MCF 10A (cell line): ENCODE measurements at regions of chr13 and their contacts with region 1.

Region 1: DNA sequence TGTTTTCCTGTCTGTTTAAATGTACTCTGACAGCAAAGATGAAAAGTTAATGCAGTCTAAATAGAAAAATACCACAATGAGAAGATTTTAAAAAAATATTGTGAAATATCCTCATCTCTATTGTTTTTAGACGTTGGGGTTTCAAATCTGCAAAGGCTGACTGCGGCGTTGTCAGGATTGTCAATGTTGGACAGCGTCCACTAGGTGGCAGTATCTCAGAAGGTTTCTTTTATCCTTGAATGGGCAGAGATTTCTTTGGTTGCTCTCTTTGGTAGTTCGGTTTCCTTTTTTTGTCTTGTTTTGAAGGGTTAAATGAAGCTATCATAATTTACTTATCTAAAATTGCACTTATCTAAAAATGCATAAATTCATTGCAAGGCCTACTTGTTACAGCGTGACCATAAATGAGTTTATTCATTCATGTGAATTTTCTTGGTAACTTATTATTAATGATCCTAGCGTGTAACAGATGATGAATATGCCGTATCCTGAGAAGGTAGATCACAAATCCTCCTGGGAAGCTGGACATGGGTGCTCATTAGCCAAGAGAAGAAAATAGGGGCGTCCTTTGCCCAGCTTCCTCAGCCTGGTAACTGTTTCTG is 21.1 kb downstream of the TNFSF11 start:
- DNase-seq: peak; percentile 89
- H3K4me3 Mint-ChIP-seq: no peak overlapping the region
- H3K27ac Mint-ChIP-seq: no peak overlapping the region
- H3K4me1 Mint-ChIP-seq: peaks cover 11% of the 10 kb centered on the region
- H3K27me3 Mint-ChIP-seq: peaks cover 17% of the 10 kb centered on the region
- CTCF ChIP-seq: peak; percentile 74

Region 2: DNA sequence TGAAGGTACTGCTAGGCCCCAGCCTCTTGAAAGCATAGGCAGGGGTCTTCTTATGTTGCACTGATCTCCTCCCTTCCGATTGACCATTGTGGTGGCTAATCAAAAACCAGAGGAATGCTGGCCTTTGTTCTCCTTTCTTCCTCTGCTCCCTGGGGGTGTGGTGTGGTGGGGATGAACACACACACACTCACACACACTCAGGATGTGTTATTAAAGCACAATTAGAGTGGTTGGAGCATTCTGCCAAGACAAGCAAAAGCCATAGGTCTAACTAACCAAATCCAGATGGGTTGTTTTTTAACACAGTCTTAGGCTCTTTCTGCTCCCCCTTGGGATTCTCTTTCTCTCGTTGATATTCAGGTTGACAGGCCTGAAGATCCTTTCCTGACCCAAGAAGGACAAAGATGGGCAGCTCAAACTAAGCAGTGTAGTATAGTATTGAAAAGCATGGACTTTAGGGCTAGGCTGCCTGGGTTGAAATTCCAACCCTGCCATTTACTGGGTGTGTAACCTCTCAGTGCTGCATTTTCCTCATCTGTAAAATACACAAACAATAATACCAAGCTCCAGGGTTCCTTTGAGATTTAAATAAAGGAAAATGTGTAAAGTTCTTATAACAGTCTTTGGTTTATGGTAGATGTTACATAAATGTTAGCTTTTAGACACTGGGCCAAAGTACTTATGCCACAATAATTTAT is 572.1 kb before region 1 on chr13:
- CTCF ChIA-PET with region 1: no interaction called
- POLR2A ChIA-PET with region 1: no interaction called
- intact Hi-C with region 1: no loop called
- DNase-seq: no peak
- H3K4me3 Mint-ChIP-seq: no peak overlapping the region
- H3K27ac Mint-ChIP-seq: no peak overlapping the region
- H3K4me1 Mint-ChIP-seq: peaks cover 18% of the 10 kb centered on the region
- H3K27me3 Mint-ChIP-seq: no peaks in the 10 kb centered on the region
- CTCF ChIP-seq: no peak

Region 3: GRCh38 chr13:42333613-42334328 is 261.3 kb before region 1 on chr13:
- CTCF ChIA-PET with region 1: interaction called, 3 read pairs
- POLR2A ChIA-PET with region 1: no interaction called
- intact Hi-C with region 1: loop called (anchors 1 kb)
- DNase-seq: peak; percentile 45
- H3K4me3 Mint-ChIP-seq: no peak overlapping the region
- H3K27ac Mint-ChIP-seq: no peak overlapping the region
- H3K4me1 Mint-ChIP-seq: peaks cover 5% of the 10 kb centered on the region
- H3K27me3 Mint-ChIP-seq: no peaks in the 10 kb centered on the region
- CTCF ChIP-seq: peak; percentile 49

Region 4: DNA sequence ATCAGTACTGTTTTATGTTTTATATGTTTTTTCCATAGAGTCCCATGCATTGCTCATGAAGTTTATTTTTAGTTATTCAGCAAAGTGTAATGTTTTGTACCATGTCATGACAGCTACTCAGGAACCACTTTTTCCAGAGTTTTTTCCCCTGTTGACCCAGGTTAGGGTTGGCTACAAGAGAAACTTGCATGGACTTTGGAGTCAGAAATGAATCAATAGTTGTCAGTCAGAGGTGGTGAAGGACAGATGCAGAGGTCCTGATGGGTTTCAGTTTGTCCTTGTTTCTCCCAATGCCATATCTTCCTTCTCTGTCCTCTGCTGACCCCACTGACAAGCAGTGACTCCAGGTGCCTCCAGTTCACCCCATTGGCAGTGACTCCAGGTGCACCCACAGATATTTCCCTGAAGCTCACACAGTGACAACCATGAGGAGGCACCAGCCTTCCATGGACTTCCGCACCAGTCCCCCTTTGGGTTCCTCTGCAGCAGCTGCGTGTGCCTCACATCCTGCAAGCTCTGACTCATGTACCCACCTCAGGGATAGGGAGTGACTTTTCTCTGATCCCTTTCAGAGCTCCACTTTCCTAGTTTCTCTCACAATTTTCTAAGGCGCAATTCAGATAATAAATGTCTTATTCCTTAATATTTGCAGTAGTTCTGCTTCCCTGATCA is 231.0 kb before region 1 on chr13:
- CTCF ChIA-PET with region 1: no interaction called
- POLR2A ChIA-PET with region 1: no interaction called
- intact Hi-C with region 1: loop called (anchors 1 kb)
- DNase-seq: peak; percentile 65
- H3K4me3 Mint-ChIP-seq: no peak overlapping the region
- H3K27ac Mint-ChIP-seq: no peak overlapping the region
- H3K4me1 Mint-ChIP-seq: peaks cover 12% of the 10 kb centered on the region
- H3K27me3 Mint-ChIP-seq: no peaks in the 10 kb centered on the region
- CTCF ChIP-seq: no peak

Region 5: GRCh38 chr13:42660333-42660965 is 65.4 kb after region 1 on chr13:
- CTCF ChIA-PET with region 1: interaction called, 15 read pairs
- POLR2A ChIA-PET with region 1: no interaction called
- intact Hi-C with region 1: loop called (anchors 2 kb)
- DNase-seq: peak; percentile 31
- H3K4me3 Mint-ChIP-seq: no peak overlapping the region
- H3K27ac Mint-ChIP-seq: no peak overlapping the region
- H3K4me1 Mint-ChIP-seq: no peaks in the 10 kb centered on the region
- H3K27me3 Mint-ChIP-seq: peaks cover 39% of the 10 kb centered on the region
- CTCF ChIP-seq: peak; percentile 35

Region 6: DNA sequence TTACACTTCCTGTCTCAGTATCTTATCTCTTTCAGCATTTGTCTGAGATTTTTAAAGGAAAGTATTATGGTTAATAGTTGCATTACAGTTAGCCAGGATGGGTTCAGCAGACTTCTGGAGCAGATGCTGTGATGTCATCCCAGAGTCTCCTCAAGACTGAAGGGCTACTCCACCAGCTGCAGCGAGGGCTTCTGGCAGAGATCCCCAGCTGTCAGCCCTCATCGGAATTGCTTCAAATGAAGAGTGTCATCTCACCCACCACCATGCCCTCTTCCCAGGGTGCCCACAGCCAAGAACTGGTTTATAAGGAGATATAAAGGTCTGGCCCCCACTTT is 270.7 kb after region 1 on chr13:
- CTCF ChIA-PET with region 1: no interaction called
- POLR2A ChIA-PET with region 1: no interaction called
- intact Hi-C with region 1: no loop called
- DNase-seq: no peak
- H3K4me3 Mint-ChIP-seq: no peak overlapping the region
- H3K27ac Mint-ChIP-seq: no peak overlapping the region
- H3K4me1 Mint-ChIP-seq: peaks cover 5% of the 10 kb centered on the region
- H3K27me3 Mint-ChIP-seq: peaks cover 11% of the 10 kb centered on the region
- CTCF ChIP-seq: no peak

Region 7: DNA sequence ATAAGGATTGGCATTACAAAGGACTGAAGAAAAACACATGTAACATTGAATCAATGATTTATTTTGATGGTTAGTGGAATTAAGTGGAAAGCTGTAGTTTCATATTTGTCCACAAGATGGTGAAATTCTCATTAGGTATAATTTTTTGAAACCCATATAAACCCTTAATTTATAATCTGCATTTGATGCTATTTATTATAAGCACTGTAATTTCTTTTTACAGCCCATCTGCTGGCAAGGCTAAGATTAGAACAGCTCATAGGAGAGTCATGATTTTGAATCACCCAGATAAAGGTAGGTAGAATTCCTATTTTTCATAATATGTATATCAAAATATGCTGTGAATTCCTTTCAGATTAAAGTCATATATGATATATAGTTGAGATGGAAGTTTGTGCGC is 490.5 kb after region 1 on chr13:
- CTCF ChIA-PET with region 1: interaction called, 5 read pairs
- POLR2A ChIA-PET with region 1: no interaction called
- intact Hi-C with region 1: loop called (anchors 10 kb)
- DNase-seq: peak; percentile 46
- H3K4me3 Mint-ChIP-seq: no peak overlapping the region
- H3K27ac Mint-ChIP-seq: no peak overlapping the region
- H3K4me1 Mint-ChIP-seq: peaks cover 16% of the 10 kb centered on the region
- H3K27me3 Mint-ChIP-seq: no peaks in the 10 kb centered on the region
- CTCF ChIP-seq: peak; percentile 32

Region 8: GRCh38 chr13:43786773-43787517 is 1191.9 kb after region 1 on chr13 and contains the start of gene ENOX1:
- CTCF ChIA-PET with region 1: no interaction called
- POLR2A ChIA-PET with region 1: no interaction called
- intact Hi-C with region 1: loop called (anchors 5 kb)
- DNase-seq: peak; percentile 60
- H3K4me3 Mint-ChIP-seq: peak within 1 kb of the TSS; percentile 80
- H3K27ac Mint-ChIP-seq: peak within 1 kb of the TSS; percentile 23
- H3K4me1 Mint-ChIP-seq: peaks cover 20% of the 10 kb centered on the region
- H3K27me3 Mint-ChIP-seq: no peaks in the 10 kb centered on the region
- CTCF ChIP-seq: peak; percentile 12
- total RNA-seq, gene ENOX1: 1.5 and 1.8 TPM in 2 replicates

Region 9: GRCh38 chr13:43792076-43792881 is 1197.2 kb after region 1 on chr13:
- CTCF ChIA-PET with region 1: interaction called, 10 read pairs
- POLR2A ChIA-PET with region 1: no interaction called
- intact Hi-C with region 1: loop called (anchors 5 kb)
- DNase-seq: peak; percentile 37
- H3K4me3 Mint-ChIP-seq: no peak overlapping the region
- H3K27ac Mint-ChIP-seq: no peak overlapping the region
- H3K4me1 Mint-ChIP-seq: peaks cover 11% of the 10 kb centered on the region
- H3K27me3 Mint-ChIP-seq: no peaks in the 10 kb centered on the region
- CTCF ChIP-seq: no peak